ENCODE measurements at regions of chr3 and their contacts with region 1.

Region 1: GRCh38 chr3:129120254-129121004 is 1.2 kb downstream of the RAB43 start:
- DNase-seq: peak; percentile 98
- H3K4me3 Mint-ChIP-seq: peak overlapping the region; percentile 94
- H3K27ac Mint-ChIP-seq: peak overlapping the region; percentile 99
- H3K4me1 Mint-ChIP-seq: peaks cover 46% of the 10 kb centered on the region
- H3K27me3 Mint-ChIP-seq: no peaks in the 10 kb centered on the region

Region 2: DNA sequence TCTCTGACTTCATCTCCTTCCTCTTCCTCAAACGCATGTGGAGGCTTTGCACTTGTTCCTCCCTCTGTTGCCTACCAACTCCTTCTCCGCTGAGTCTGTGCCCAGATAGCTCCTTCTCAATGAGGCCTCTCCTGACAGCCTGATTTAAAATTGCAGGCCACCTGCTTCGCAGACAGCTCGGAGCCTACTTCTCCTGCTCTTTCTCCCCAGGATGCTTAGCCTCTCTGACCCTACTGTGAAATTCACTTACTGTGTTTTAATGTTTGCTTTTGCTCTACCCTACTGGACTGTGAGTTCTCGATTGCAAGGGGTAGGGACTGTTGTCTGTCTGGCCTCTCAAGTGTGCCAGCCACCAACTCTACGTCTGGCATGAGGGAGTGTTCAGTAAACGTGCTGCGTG is 883.8 kb before region 1 on chr3:
- CTCF ChIA-PET with region 1: no interaction called
- intact Hi-C with region 1: no loop called
- DNase-seq: no peak
- H3K4me3 Mint-ChIP-seq: no peak overlapping the region
- H3K27ac Mint-ChIP-seq: no peak overlapping the region
- H3K4me1 Mint-ChIP-seq: peaks cover 22% of the 10 kb centered on the region
- H3K27me3 Mint-ChIP-seq: no peaks in the 10 kb centered on the region

Region 3: DNA sequence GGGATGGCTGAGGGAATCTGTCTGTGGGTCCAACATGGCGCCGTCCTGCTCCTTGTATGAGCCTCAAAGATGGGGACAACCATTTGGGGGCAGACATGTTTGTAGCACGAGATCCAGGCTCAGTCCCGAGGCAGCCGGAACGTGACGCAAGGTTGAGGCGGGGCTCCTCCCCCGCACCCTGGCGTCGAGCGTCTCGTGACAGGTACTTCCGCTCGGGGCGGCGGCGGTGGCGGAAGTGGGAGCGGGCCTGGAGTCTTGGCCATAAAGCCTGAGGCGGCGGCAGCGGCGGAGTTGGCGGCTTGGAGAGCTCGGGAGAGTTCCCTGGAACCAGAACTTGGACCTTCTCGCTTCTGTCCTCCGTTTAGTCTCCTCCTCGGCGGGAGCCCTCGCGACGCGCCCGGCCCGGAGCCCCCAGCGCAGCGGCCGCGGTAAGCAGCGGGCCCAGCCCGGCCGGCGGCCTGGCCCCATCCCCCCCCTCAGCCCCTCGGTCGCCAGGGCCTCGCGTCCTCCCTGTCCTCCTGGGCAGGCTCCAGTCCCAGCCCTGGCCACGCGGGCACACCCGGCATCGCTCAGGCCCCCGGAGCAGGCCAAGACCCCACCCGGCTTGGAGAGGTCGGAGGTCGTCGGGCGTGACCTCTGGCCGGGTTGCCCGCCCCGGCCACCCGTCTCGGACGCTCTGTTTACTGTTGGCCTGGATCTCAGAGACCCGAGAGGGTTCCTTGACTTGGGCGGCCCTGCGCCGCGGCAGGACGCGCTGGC is 394.3 kb before region 1 on chr3 and contains the start of gene RAB7A:
- CTCF ChIA-PET with region 1: no interaction called
- intact Hi-C with region 1: loop called (anchors 5 kb)
- DNase-seq: peak; percentile 99
- H3K4me3 Mint-ChIP-seq: peak within 1 kb of the TSS; percentile 81
- H3K27ac Mint-ChIP-seq: peak within 1 kb of the TSS; percentile 89
- H3K4me1 Mint-ChIP-seq: peaks cover 53% of the 10 kb centered on the region
- H3K27me3 Mint-ChIP-seq: no peaks in the 10 kb centered on the region
- total RNA-seq, gene RAB7A: 222 to 228 TPM

Region 4: GRCh38 chr3:129026728-129027543 is 93.5 kb before region 1 on chr3:
- CTCF ChIA-PET with region 1: interaction called, 5 read pairs
- intact Hi-C with region 1: loop called (anchors 1 kb)
- DNase-seq: peak; percentile 96
- H3K4me3 Mint-ChIP-seq: peak overlapping the region; percentile 77
- H3K27ac Mint-ChIP-seq: peak overlapping the region; percentile 82
- H3K4me1 Mint-ChIP-seq: peaks cover 7% of the 10 kb centered on the region
- H3K27me3 Mint-ChIP-seq: no peaks in the 10 kb centered on the region

Region 5: DNA sequence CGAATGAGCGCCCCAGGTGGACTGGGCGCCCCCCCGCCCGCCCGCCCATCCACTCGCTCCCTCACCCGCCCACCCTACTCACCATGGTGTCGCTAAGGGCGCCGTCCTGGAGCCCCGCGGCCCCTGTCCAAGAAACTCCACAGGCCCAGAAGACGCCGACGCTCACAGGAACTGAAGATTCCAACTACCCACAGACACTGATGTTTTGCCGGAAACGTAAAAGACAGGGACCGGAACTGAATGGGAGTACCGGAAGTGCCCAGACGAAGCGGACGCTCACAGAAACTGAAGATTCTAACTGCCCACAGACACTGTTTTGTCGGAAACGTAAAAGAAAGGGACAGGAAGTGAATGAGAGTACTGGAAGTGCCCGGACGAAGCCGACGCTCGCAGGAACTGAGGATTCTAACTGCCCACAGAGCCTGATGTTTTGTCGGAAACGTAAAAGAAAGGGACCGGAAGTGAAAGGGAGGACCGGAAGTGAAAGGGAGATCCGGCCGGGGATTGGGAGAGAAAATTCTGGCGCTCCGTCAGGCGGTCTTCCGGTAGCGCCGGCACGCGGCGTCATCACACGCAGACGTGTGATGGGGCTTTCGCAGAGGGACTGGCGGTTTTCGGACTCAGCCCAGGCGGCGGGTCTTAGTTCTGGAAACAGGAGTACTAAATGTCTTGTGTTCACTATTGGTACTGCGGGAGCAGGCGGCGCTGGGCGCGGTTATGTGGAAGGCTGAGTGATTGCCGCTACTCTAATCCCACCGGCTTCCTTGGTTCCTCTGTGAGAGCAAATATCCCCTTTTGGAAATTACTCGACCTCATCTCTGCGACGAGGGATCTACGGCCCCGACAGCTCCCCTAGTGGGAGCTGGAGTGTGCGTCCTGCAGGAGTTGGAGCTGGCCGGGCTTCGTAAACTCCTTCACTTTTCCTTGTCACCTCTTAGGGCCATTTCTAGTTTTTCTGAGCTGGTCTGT is 40.7 kb after region 1 on chr3 and contains the start of gene ISY1:
- CTCF ChIA-PET with region 1: interaction called, 36 read pairs
- intact Hi-C with region 1: loop called (anchors 1 kb)
- DNase-seq: peak; percentile 91
- H3K4me3 Mint-ChIP-seq: peak within 1 kb of the TSS; percentile 87
- H3K27ac Mint-ChIP-seq: peak within 1 kb of the TSS; percentile 99
- H3K4me1 Mint-ChIP-seq: peaks cover 31% of the 10 kb centered on the region
- H3K27me3 Mint-ChIP-seq: no peaks in the 10 kb centered on the region
- total RNA-seq, gene ISY1: 56.8 to 65.4 TPM

Region 6: DNA sequence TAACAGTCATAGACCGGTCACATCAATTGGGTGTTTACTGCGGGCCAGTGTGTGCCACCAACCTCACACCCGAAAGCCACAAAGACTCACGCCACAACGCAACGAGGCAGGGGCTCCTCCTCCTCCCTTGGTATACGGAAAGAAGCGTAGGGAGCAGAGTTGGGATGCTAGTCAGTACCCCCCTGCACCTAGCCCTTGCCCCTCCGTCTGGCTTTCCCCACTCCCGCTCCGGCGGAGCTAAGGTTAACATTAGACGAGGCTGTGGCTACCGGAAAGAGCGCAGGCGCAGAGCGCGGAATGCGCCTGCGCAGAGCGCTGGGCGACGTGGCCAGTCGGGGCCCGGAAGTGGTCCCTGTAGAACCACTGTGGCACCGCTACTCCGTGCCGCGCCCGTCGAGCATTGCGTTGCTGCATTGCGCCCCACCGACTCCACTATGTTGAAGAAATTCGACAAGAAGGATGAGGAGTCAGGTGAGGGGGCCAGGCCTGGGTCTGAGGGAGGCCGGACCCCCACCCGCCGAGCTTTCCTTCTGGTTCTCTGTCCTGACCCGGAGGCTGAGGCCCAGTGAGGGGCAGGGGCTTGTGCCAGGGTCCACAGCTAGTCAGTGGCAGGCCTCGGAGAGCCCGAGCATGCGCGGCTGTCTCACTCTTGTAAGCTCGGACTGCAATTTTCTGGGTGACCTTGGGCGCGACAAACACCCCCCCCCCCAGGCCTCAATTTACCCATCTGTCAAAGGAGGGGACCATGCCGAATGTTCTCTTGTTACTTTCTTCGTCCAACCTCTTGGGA is 129.0 kb after region 1 on chr3 and contains the start of gene COPG1:
- CTCF ChIA-PET with region 1: interaction called, 3 read pairs
- intact Hi-C with region 1: loop called (anchors 1 kb)
- DNase-seq: peak; percentile 86
- H3K4me3 Mint-ChIP-seq: peak within 1 kb of the TSS; percentile 95
- H3K27ac Mint-ChIP-seq: peak within 1 kb of the TSS; percentile 89
- H3K4me1 Mint-ChIP-seq: peaks cover 33% of the 10 kb centered on the region
- H3K27me3 Mint-ChIP-seq: no peaks in the 10 kb centered on the region
- total RNA-seq, gene COPG1: 125 to 128 TPM

Region 7: GRCh38 chr3:129316131-129317013 is 195.9 kb after region 1 on chr3:
- CTCF ChIA-PET with region 1: no interaction called
- intact Hi-C with region 1: loop called (anchors 1 kb)
- DNase-seq: peak; percentile 87
- H3K4me3 Mint-ChIP-seq: peak overlapping the region; percentile 96
- H3K27ac Mint-ChIP-seq: peak overlapping the region; percentile 85
- H3K4me1 Mint-ChIP-seq: peaks cover 14% of the 10 kb centered on the region
- H3K27me3 Mint-ChIP-seq: no peaks in the 10 kb centered on the region